Activated CD4-positive, alpha-beta T cell treated with anti-CD3 and anti-CD28 coated beads, Interleukin-2, amount 10 ng/mL, durations not matched to agents 24 days and 14 days (primary cell): ENCODE measurements at regions of chr15 and their contacts with region 1.

Region 1: GRCh38 chr15:98647774-98648653 is at the start of gene IGF1R:
- DNase-seq: peak; percentile 98
- H3K4me3 Mint-ChIP-seq: peak within 1 kb of the TSS; percentile 85
- H3K27ac Mint-ChIP-seq: peak within 1 kb of the TSS; percentile 95
- H3K4me1 Mint-ChIP-seq: peaks cover 30% of the 10 kb centered on the region
- H3K27me3 Mint-ChIP-seq: peaks cover 55% of the 10 kb centered on the region
- total RNA-seq, gene IGF1R: 35.3 and 36.6 TPM in 2 replicates

Region 2: DNA sequence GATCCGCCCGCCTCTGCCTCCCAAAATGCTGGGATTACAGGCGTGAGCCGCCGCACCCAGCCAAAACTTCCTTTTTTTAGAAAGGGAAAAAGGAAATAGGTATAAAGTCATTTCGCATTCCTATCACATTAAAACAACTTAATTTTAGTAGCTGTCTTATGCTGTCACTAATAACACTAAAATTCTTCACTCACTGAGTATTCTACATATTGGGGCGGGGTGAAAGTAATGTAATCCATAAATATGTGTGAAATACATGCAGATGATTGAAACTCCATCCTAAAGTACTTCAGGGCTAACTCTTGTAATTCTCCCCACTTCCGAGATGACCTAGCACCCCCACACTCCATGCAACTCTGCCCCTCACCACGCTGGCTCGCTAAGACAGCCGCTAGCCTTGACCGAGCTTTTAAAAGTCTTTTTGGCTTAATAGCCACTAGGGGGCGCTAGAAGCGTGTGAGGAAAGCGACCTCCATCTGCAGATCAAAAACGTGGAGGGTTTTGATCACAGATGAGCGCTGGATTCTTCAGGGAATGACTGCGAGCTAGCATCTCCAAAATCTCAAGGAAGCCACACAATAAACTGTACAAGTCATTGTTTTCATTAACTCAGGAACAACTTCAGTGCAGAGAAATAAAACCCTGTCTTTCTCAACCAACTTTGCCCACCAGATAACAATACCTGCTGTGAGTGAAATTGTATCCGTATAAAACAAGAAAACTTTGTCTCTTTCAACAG is 129.0 kb before region 1 on chr15:
- intact Hi-C with region 1: loop called (anchors 1 kb)
- DNase-seq: peak; percentile 83
- H3K4me3 Mint-ChIP-seq: no peak overlapping the region
- H3K27ac Mint-ChIP-seq: no peak overlapping the region
- H3K4me1 Mint-ChIP-seq: peaks cover 5% of the 10 kb centered on the region
- H3K27me3 Mint-ChIP-seq: peaks cover 4% of the 10 kb centered on the region

Region 3: GRCh38 chr15:98599909-98600691 is 47.9 kb before region 1 on chr15:
- intact Hi-C with region 1: loop called (anchors 2 kb)
- DNase-seq: peak; percentile 85
- H3K4me3 Mint-ChIP-seq: peak overlapping the region; percentile 87
- H3K27ac Mint-ChIP-seq: peak overlapping the region; percentile 88
- H3K4me1 Mint-ChIP-seq: peaks cover 15% of the 10 kb centered on the region
- H3K27me3 Mint-ChIP-seq: peaks cover 9% of the 10 kb centered on the region

Region 4: DNA sequence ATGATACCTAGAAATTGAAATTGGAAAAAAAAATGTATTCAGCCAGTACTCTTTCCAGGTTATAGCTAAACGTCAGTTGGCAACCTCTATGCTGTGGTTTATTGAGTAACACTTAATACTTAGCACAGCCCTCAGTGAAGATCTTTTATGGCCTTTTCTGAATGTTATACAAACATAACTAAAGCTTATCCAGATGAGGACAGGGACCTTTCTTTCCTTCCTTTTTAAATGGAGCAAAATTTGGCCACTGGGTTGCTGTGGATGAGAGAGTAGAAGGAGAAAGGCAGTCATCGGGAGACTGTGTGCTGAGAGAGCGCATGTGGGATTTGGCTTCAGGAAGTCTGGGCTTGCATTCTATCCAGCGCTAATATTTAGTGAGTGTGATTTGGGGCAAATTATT is 36.4 kb after region 1 on chr15:
- intact Hi-C with region 1: no loop called
- DNase-seq: no peak
- H3K4me3 Mint-ChIP-seq: no peak overlapping the region
- H3K27ac Mint-ChIP-seq: no peak overlapping the region
- H3K4me1 Mint-ChIP-seq: peaks cover 38% of the 10 kb centered on the region
- H3K27me3 Mint-ChIP-seq: no peaks in the 10 kb centered on the region

Region 5: GRCh38 chr15:98700519-98700918 is 52.5 kb after region 1 on chr15:
- intact Hi-C with region 1: no loop called
- DNase-seq: no peak
- H3K4me3 Mint-ChIP-seq: peak overlapping the region; percentile 48
- H3K27ac Mint-ChIP-seq: peak overlapping the region; percentile 79
- H3K4me1 Mint-ChIP-seq: peaks cover 37% of the 10 kb centered on the region
- H3K27me3 Mint-ChIP-seq: no peaks in the 10 kb centered on the region

Region 6: DNA sequence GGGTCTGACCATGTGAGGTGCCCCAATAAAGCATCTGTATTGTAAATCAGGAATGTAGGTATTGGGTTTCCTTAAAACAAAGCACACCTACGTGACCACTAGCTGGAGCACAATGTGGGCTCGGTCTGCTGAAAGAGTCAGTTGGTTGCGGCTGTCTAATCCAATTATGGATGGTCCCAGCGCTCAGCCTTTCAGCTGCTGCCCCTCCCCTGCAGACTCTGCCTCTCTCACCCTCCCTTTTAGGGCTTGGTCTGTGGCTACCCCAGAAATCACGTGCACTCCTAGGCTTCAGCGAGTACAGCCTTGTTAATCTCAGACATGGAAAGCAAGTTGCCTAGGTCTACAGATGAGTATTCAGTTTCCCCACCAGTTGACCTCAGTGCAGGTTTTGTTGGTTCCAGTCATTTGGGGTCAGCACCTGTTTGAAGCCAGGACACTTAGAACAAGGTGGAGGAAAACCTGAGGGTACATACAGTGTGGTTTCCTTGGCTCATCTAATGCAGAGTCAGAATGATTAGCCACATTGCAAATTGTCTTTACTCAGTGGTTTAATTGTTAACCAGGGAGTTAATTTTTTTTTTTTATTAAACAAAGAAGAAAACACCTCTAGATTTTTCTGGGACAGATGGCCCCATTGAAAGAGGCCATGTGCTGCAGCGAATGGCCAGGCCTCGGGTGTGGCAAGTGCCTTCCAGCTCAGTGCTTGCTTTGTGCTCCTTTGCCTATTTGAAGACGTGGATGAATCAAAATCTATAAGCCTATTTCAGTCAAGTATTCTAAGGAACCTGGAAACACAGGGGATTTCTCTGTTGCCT is 138.0 kb after region 1 on chr15:
- intact Hi-C with region 1: loop called (anchors 5 kb)
- DNase-seq: no peak
- H3K4me3 Mint-ChIP-seq: no peak overlapping the region
- H3K27ac Mint-ChIP-seq: peak overlapping the region; percentile 22
- H3K4me1 Mint-ChIP-seq: peaks cover 29% of the 10 kb centered on the region
- H3K27me3 Mint-ChIP-seq: no peaks in the 10 kb centered on the region

Region 7: DNA sequence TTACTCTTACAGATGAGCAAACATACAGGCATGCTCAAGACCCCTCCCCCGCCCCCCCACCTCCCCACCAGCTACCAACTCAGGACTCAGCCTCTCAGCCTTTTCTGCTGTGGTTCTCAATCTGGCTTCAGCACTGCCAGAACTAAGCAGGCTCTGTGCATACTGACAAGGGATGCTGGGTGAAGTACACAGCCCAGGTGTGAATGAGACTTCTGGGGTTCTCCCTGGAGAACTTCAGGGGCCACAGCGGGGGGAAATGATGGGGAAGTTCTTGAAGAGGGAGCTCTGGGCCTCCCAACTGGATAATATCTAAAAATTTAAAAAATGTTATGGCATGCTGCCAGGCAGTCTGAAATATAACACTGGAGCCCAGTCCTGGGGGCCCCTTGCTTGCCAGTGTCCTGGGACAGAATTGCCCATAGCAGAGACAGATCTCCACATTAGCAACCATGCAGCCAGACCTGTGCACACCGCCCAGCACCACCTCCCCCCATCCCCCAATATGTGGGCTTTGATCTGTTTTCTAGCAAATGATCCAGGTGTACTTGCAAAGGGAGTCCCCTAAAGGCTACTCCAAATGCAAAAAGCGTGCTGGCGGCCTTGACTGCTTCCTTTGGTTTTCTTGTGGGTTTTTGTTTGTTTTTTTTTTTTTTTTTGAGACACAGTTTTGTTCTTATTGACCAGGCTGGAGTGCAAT is 318.2 kb after region 1 on chr15:
- intact Hi-C with region 1: no loop called
- DNase-seq: no peak
- H3K4me3 Mint-ChIP-seq: no peak overlapping the region
- H3K27ac Mint-ChIP-seq: no peak overlapping the region
- H3K4me1 Mint-ChIP-seq: no peaks in the 10 kb centered on the region
- H3K27me3 Mint-ChIP-seq: no peaks in the 10 kb centered on the region

Region 8: GRCh38 chr15:99059010-99059981 is 411.3 kb after region 1 on chr15:
- intact Hi-C with region 1: loop called (anchors 5 kb)
- DNase-seq: peak; percentile 88
- H3K4me3 Mint-ChIP-seq: peak overlapping the region; percentile 69
- H3K27ac Mint-ChIP-seq: no peak overlapping the region
- H3K4me1 Mint-ChIP-seq: peaks cover 5% of the 10 kb centered on the region
- H3K27me3 Mint-ChIP-seq: peaks cover 44% of the 10 kb centered on the region